ENCODE measurements at regions of chr15 and their contacts with region 1.

Region 1: DNA sequence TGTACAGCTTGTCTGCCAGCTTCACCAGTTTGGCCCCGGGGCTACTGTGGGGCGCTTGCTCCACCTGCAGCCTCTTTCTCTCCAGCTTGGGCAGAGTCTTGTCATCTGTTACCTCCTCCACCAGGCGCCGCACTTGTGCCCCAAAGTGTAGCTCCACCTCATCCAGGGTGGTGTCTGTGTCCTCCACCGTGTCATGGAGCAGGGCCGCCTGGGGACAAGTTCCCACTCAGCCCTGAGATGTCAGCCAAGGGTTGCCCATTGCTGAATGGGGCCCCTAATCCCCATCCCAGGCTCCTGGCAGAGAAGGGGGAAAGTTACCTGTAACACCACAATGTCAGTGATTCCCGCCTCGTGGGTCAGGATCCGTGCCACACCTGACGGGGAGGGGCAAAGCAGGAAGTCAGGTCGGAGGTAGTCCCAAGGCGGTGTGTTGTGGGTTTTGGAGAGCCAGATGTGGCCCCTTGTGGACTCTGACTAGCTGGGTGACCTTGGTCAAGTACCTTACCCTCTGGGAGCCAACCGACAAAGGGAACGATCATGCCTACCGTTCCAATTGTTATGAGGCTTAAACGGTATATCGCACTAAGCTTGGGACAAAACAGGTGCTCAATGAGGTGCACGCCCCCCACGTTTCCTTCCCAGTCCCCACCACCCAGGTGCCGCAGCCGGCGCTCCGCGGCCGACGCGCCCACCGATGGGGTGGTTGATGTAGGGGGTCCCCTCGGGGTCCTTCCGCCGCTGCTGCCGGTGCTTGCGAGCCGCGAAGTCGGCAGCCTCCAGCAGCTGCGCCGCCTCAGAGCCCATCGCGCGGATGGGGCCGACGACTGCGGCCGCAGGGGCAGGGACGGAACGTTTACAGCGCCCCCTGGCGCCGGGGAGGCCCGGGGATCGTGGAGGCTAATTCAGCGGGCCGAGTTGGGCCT is at the start of gene HDDC3:
- DNase-seq: peak; percentile 84 to 89
- H3K4me3 ChIP-seq: peak within 1 kb of the TSS; percentile 88
- H3K27ac ChIP-seq: peak within 1 kb of the TSS; percentile 58
- H3K4me1 ChIP-seq: peaks cover 33% of the 10 kb centered on the region
- H3K27me3 ChIP-seq: no peaks in the 10 kb centered on the region
- CTCF ChIP-seq: peak; percentile 88
- total RNA-seq, gene HDDC3: 18.1 and 20.9 TPM in 2 replicates

Region 2: GRCh38 chr15:90184786-90185569 is 747.0 kb before region 1 on chr15:
- CTCF ChIA-PET with region 1: interaction called, 10 read pairs
- POLR2A ChIA-PET with region 1: no interaction called
- intact Hi-C with region 1: no loop called
- DNase-seq: peak; percentile 57 to 72
- H3K4me3 ChIP-seq: peak overlapping the region; percentile 71
- H3K27ac ChIP-seq: peak overlapping the region; percentile 85
- H3K4me1 ChIP-seq: peaks cover 34% of the 10 kb centered on the region
- H3K27me3 ChIP-seq: no peaks in the 10 kb centered on the region
- CTCF ChIP-seq: no peak

Region 3: GRCh38 chr15:90482124-90483011 is 449.6 kb before region 1 on chr15:
- CTCF ChIA-PET with region 1: no interaction called
- POLR2A ChIA-PET with region 1: no interaction called
- intact Hi-C with region 1: loop called (anchors 10 kb)
- DNase-seq: peak in 1 of 2 experiments; percentile 24
- H3K4me3 ChIP-seq: no peak overlapping the region
- H3K27ac ChIP-seq: no peak overlapping the region
- H3K4me1 ChIP-seq: peaks cover 42% of the 10 kb centered on the region
- H3K27me3 ChIP-seq: no peaks in the 10 kb centered on the region
- CTCF ChIP-seq: peak; percentile 87

Region 4: GRCh38 chr15:90886041-90886614 is 45.9 kb before region 1 on chr15:
- CTCF ChIA-PET with region 1: no interaction called
- POLR2A ChIA-PET with region 1: no interaction called
- intact Hi-C with region 1: no loop called
- DNase-seq: peak in 1 of 2 experiments; percentile 66
- H3K4me3 ChIP-seq: no peak overlapping the region
- H3K27ac ChIP-seq: no peak overlapping the region
- H3K4me1 ChIP-seq: no peaks in the 10 kb centered on the region
- H3K27me3 ChIP-seq: no peaks in the 10 kb centered on the region
- CTCF ChIP-seq: peak; percentile 98

Region 5: GRCh38 chr15:90902040-90902839 is 29.8 kb before region 1 on chr15:
- CTCF ChIA-PET with region 1: interaction called, 11 read pairs
- POLR2A ChIA-PET with region 1: interaction called, 4 read pairs
- intact Hi-C with region 1: loop called (anchors 2 kb)
- DNase-seq: peak; percentile 60 to 75
- H3K4me3 ChIP-seq: peak overlapping the region; percentile 60
- H3K27ac ChIP-seq: peak overlapping the region; percentile 25; the same call in 1 of the 2 replicates
- H3K4me1 ChIP-seq: peaks cover 18% of the 10 kb centered on the region
- H3K27me3 ChIP-seq: no peaks in the 10 kb centered on the region
- CTCF ChIP-seq: peak; percentile 69

Region 6: GRCh38 chr15:90954712-90955671 is 23.0 kb after region 1 on chr15 and contains the start of gene RCCD1:
- CTCF ChIA-PET with region 1: interaction called, 10 read pairs
- POLR2A ChIA-PET with region 1: interaction called, 9 read pairs
- intact Hi-C with region 1: no loop called
- DNase-seq: peak; percentile 90 to 92
- H3K4me3 ChIP-seq: peak within 1 kb of the TSS; percentile 98
- H3K27ac ChIP-seq: peak within 1 kb of the TSS; percentile 88
- H3K4me1 ChIP-seq: peaks cover 10% of the 10 kb centered on the region
- H3K27me3 ChIP-seq: no peaks in the 10 kb centered on the region
- CTCF ChIP-seq: no peak
- total RNA-seq, gene RCCD1: 51.4 and 51.5 TPM in 2 replicates

Region 7: DNA sequence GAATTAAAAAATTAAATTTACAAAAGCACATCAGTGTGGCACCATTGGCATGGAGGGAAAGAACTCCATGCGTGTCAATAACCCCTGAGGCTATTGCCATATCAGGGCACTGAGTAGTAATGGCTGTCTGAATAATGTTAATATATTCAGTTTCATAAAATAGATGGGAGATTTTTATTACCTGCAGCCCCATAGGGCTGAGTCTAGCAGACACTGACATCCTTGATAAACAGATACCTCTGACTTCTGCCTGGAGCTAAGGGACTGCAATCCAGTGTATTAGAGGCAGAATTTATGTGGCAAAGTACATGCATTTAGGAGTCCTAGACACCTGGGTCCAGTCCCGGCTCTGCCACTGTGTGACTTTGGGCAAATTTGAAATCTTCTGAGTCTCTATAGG is 129.2 kb after region 1 on chr15:
- CTCF ChIA-PET with region 1: no interaction called
- POLR2A ChIA-PET with region 1: interaction called, 11 read pairs
- intact Hi-C with region 1: no loop called
- DNase-seq: no peak
- H3K4me3 ChIP-seq: no peak overlapping the region
- H3K27ac ChIP-seq: no peak overlapping the region
- H3K4me1 ChIP-seq: no peaks in the 10 kb centered on the region
- H3K27me3 ChIP-seq: peaks cover 39% of the 10 kb centered on the region
- CTCF ChIP-seq: no peak

Measured in PC-9 (cell line).